Heart right ventricle (tissue), 16 donors: ENCODE measurements at regions of chr9 and their contacts with region 1.

Region 1: DNA sequence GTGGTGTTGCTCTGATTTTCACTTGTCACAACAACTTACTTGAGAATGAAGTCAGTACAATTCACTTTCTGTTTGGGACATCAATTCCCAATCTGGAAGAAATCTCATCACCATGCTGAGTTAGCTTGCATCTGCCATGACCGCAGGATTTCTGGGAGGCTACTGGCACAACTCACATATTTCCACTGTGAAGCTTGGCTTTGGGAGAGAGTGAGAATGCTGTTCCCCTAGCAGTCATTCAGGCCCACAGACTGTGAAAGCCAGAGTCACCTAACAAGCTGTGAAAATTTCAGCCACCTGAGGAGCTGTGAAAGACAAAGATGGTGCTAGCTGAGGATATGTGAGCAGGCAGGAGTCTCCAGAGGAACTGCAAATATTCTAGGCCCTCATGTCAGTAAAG is 365.2 kb upstream of the TUSC1 start:
- DNase-seq: no peak
- ATAC-seq: no peak
- H3K4me3 ChIP-seq: no peak overlapping the region
- H3K27ac ChIP-seq: no peak overlapping the region
- H3K4me1 ChIP-seq: no peaks in the 10 kb centered on the region
- H3K27me3 ChIP-seq: no peaks in the 10 kb centered on the region
- CTCF ChIP-seq: no peak

Region 2: GRCh38 chr9:26081847-26082246 is 38.4 kb after region 1 on chr9:
- intact Hi-C with region 1: loop called in 1 of 10 experiments (anchors 5 kb)
- DNase-seq: no peak
- ATAC-seq: no peak
- H3K4me3 ChIP-seq: no peak overlapping the region
- H3K27ac ChIP-seq: no peak overlapping the region
- H3K4me1 ChIP-seq: no peaks in the 10 kb centered on the region
- H3K27me3 ChIP-seq: no peaks in the 10 kb centered on the region
- CTCF ChIP-seq: no peak

Region 3: GRCh38 chr9:26157411-26157810 is 114.0 kb after region 1 on chr9:
- intact Hi-C with region 1: no loop called
- DNase-seq: no peak
- ATAC-seq: no peak
- H3K4me3 ChIP-seq: no peak overlapping the region
- H3K27ac ChIP-seq: no peak overlapping the region
- H3K4me1 ChIP-seq: no peaks in the 10 kb centered on the region
- H3K27me3 ChIP-seq: no peaks in the 10 kb centered on the region
- CTCF ChIP-seq: no peak

Region 4: GRCh38 chr9:26502311-26502710 is 458.9 kb after region 1 on chr9:
- intact Hi-C with region 1: no loop called
- DNase-seq: no peak
- ATAC-seq: no peak
- H3K4me3 ChIP-seq: no peak overlapping the region
- H3K27ac ChIP-seq: no peak overlapping the region
- H3K4me1 ChIP-seq: no peaks in the 10 kb centered on the region
- H3K27me3 ChIP-seq: no peaks in the 10 kb centered on the region
- CTCF ChIP-seq: no peak